PC-9 (cell line): ENCODE measurements at regions of chr11 and their contacts with region 1.

Region 1: DNA sequence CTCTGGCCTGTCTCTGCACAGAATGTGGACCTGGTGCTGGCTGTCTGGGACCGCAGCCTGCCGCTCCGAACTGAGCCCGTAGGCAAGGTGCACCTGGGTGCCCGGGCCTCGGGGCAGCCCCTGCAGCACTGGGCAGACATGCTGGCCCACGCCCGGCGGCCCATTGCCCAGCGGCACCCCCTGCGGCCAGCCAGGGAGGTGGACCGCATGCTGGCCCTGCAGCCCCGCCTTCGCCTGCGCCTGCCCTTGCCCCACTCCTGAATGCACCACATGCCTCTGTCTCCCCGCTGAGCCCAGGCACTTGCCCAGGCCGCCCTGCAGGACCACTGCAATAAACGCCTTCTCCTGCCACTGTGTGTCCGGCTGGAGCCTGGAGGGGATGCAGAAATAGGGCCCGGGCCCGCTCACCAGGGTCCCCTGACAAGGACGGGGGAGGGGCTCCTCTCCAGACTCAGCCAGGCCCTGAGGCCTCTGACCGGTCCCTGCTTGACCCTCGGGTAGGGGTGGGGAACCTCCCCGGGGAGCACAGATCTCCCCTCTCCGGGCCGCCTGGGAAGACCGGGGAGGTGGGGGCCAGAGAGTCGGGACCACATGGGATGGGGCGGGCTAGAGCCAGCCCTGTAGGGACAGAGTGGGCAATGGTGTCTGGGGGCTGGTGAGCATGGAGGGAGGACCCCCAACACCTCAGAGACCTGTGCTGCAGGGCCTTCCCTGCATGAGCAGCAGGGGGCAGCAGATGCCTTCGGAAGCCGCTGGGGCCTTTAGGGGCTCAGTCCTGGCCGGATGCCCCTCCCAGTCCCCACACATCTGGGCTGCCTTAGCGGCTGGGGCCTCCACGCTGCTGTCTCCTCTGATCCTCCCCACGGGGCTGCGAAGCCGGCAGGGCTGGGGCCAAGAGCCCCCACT is 1.4 kb upstream of the TNNI2 start:
- DNase-seq: peak in 1 of 2 experiments; percentile 44
- H3K4me3 ChIP-seq: no peak overlapping the region
- H3K27ac ChIP-seq: no peak overlapping the region
- H3K4me1 ChIP-seq: peaks cover 28% of the 10 kb centered on the region
- H3K27me3 ChIP-seq: no peaks in the 10 kb centered on the region
- CTCF ChIP-seq: peak; percentile 78

Region 2: GRCh38 chr11:1382831-1383607 is 454.4 kb before region 1 on chr11:
- CTCF ChIA-PET with region 1: no interaction called
- POLR2A ChIA-PET with region 1: no interaction called
- intact Hi-C with region 1: no loop called
- DNase-seq: peak in 1 of 2 experiments; percentile 63
- H3K4me3 ChIP-seq: peak overlapping the region; percentile 52
- H3K27ac ChIP-seq: no peak overlapping the region
- H3K4me1 ChIP-seq: no peaks in the 10 kb centered on the region
- H3K27me3 ChIP-seq: peaks cover 8% of the 10 kb centered on the region; the same call in 1 of the 2 replicates
- CTCF ChIP-seq: no peak

Region 3: GRCh38 chr11:1814680-1815318 is 22.6 kb before region 1 on chr11:
- CTCF ChIA-PET with region 1: no interaction called
- POLR2A ChIA-PET with region 1: no interaction called
- intact Hi-C with region 1: no loop called
- DNase-seq: no peak
- H3K4me3 ChIP-seq: no peak overlapping the region
- H3K27ac ChIP-seq: no peak overlapping the region
- H3K4me1 ChIP-seq: 0 out of 2 replicates have a peak, but pooled peaks cover 4% of the 10 kb centered on the region
- H3K27me3 ChIP-seq: no peaks in the 10 kb centered on the region
- CTCF ChIP-seq: no peak

Region 4: DNA sequence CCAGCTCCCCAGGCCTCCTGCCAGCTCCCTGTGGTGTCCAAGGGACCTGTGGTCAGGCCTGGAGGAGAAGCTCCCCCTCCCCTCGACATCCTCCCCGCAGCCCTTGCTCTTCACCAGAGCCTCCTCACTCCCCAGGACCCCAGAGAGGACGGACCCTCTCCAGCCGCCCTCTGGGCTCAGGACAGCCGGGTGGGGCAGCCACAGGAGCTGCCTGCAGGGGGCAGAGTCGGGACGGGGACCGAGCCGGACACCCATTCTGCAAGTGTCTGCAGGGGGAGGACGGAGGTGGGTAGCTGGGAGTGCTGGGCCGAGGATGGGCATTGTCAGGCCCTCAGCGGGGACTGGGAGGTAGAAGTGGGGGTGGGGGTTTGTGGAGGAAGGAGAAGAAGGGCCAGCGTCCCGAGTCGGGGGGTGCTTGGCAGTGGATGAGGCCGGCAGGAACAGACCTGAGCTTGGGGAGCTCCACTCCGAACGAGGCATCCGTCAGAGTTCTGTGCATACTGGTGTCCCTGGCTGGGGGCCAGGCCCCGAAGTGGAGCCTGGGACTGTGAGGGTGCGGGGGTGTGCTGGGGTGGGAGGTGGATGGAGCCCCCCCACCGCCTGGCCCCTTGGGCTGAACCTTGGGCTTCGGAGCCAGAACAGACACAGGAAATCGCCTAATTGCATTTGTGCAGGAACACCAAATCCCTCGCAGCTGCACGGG is 39.1 kb after region 1 on chr11:
- CTCF ChIA-PET with region 1: interaction called, 11 read pairs
- POLR2A ChIA-PET with region 1: no interaction called
- intact Hi-C with region 1: no loop called
- DNase-seq: no peak
- H3K4me3 ChIP-seq: no peak overlapping the region
- H3K27ac ChIP-seq: no peak overlapping the region
- H3K4me1 ChIP-seq: no peaks in the 10 kb centered on the region
- H3K27me3 ChIP-seq: no peaks in the 10 kb centered on the region
- CTCF ChIP-seq: peak; percentile 52; the same call in 1 of the 2 replicates

Region 5: GRCh38 chr11:1882519-1883238 is 45.3 kb after region 1 on chr11:
- CTCF ChIA-PET with region 1: interaction called, 11 read pairs
- POLR2A ChIA-PET with region 1: no interaction called
- intact Hi-C with region 1: loop called (anchors 2 kb)
- DNase-seq: peak in 1 of 2 experiments; percentile 71
- H3K4me3 ChIP-seq: no peak overlapping the region
- H3K27ac ChIP-seq: no peak overlapping the region
- H3K4me1 ChIP-seq: no peaks in the 10 kb centered on the region
- H3K27me3 ChIP-seq: peaks cover 19% of the 10 kb centered on the region; the same call in 1 of the 2 replicates
- CTCF ChIP-seq: peak; percentile 82